ENCODE measurements at regions of chr22 and their contacts with region 1.

Region 1: GRCh38 chr22:38317122-38317994 is at the start of gene CSNK1E:
- DNase-seq: peak; percentile 96

Region 2: DNA sequence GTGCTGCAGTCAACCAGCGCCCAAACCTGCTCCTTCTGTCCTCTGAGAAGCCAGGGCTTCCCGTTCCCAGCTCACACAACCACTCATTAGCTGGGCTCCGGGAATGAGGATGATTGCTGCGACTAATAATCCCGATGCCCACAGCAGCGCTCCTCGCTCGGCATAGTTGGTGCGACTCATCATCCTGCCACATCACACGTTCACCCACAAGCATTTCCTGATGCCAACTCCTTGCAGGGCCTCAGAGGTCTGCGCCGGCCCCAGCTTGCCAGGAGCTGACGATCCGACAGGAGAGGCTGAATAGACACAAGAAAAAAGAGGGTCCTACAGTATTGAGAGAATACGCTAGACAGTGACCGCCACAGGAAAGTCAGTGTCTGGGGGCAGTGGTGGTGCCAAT is 10.4 kb after region 1 on chr22:
- CTCF ChIA-PET with region 1: interaction called, 3 read pairs
- POLR2A ChIA-PET with region 1: interaction called, 17 read pairs
- DNase-seq: no peak

Region 3: DNA sequence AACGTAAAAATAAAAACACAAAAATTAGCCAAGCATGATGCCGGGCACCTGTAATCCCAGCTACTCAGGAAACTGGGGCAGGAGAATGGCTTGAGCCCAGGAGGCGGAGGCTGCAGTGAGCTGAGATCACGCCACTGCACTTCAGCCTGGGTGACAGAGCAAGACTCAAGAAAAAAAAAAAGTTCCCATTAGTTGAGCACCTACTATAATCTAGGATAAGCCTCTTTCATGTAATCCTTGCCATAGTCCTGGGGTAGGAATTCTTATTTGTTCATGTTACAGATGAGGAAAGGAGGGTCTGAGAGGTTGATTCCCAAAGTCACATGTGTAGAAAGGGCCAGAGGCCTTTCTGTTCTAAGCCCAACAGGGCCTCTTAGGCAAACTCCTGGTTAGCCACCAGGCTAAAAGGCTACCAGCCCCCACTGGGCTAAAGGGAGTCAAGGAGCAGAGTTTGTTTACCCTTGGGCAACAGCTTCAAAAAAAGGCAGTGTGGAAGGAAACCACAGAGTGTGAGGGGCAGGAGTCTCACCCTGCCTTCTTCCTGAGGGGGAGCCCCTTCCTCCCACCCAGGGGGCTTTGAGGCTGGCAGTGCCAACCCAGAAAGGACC is 21.5 kb after region 1 on chr22:
- CTCF ChIA-PET with region 1: no interaction called
- POLR2A ChIA-PET with region 1: interaction called, 13 read pairs
- DNase-seq: no peak

Region 4: GRCh38 chr22:38398609-38399461 is 81.5 kb after region 1 on chr22:
- CTCF ChIA-PET with region 1: no interaction called
- POLR2A ChIA-PET with region 1: interaction called, 14 read pairs
- DNase-seq: peak; percentile 95